ENCODE measurements at regions of chr16 and their contacts with region 1.

Region 1: GRCh38 chr16:23435500-23435899 is 17.5 kb downstream of the COG7 start:
- DNase-seq: no peak
- H3K4me3 ChIP-seq: no peak overlapping the region
- H3K27me3 ChIP-seq: no peaks in the 10 kb centered on the region
- CTCF ChIP-seq: peak; percentile 87

Region 2: DNA sequence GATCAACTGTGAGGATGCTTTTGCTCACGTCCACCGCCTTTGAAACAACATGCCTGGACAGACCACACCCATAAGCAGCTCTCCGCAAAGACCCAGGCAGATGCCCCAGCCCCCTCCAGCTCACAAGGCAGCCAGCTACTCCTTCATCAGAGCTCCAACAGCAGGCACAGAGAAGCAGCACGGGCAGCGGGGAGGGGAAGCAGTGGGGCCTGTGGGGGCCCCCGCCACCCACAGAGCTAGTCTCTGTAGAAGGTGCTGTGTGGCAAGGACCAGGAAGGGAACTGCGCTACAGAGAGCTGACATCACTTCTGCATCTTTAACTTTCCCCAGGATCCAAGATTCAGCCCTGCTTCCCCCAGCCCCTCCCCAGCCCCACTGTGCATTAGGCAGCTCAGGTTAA is 262.9 kb before region 1 on chr16:
- CTCF ChIA-PET with region 1: interaction called, 292 read pairs
- POLR2A ChIA-PET with region 1: no interaction called
- DNase-seq: no peak
- H3K4me3 ChIP-seq: no peak overlapping the region
- H3K27me3 ChIP-seq: no peaks in the 10 kb centered on the region
- CTCF ChIP-seq: no peak

Region 3: DNA sequence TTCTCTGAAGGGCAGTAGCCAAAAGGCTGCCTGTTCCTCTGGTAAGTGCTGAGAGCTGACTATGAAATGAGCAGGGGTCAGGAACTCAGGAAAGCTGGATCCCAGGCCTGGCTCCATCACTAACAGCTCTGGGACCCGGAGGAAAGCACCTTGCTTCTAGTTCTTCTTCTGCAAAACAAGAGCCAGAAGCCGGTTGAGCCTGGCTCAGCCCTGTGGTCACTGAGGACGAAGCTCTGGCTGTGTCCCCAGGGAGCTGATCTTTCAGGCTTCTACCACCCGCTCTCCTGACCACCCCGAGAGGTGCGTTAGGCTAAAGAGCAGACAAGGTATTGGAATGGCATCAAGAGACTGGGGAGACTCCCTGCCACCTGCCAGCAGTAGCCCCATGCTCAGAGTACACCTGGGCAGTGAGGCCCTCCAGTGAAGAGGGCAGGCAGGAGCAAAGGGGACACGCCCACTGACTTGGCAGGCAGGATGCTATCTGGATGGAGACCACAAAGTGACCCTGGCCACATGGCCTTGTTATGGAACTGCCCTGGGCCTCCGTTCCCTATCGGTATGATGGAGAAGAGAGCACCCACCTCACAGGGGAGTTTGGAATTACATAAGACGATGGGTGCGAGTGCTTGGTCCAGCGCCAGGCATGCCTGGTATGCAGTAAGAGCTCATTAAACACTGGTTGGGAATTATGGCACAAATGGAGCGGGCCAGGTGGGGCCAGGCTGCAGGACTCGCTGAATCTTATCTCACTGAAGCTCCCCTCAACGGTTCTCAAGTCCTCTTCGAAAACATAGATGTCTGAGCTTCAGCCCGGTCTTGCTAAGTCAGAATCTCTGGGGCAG is 43.9 kb before region 1 on chr16:
- CTCF ChIA-PET with region 1: interaction called, 22 read pairs
- POLR2A ChIA-PET with region 1: no interaction called
- DNase-seq: no peak
- H3K4me3 ChIP-seq: no peak overlapping the region
- H3K27me3 ChIP-seq: no peaks in the 10 kb centered on the region
- CTCF ChIP-seq: no peak

Region 4: DNA sequence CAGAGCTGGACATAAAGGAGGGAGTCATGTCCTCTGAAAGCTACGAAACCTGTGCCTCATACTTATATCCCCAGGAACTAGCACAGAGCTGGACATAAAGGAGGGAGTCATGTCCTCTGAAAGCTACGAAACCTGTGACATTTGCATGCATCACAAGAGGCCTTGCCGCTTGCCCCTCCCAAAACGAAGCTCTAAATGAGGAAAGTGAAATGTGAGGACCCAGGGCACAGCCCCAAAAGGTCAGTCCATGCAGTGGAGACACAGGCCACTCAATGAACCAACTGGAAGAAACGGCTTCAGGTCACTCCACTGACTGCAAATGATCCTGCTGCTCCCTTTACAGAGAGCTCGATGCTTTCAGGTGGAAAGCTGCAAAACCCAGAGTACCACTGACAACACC is 20.8 kb before region 1 on chr16:
- CTCF ChIA-PET with region 1: interaction called, 21 read pairs
- POLR2A ChIA-PET with region 1: no interaction called
- DNase-seq: no peak
- H3K4me3 ChIP-seq: no peak overlapping the region
- H3K27me3 ChIP-seq: no peaks in the 10 kb centered on the region
- CTCF ChIP-seq: no peak

Region 5: GRCh38 chr16:23452572-23453337 is 17.3 kb after region 1 on chr16 and contains the start of gene COG7:
- CTCF ChIA-PET with region 1: interaction called, 41 read pairs
- POLR2A ChIA-PET with region 1: no interaction called
- DNase-seq: peak; percentile 41
- H3K4me3 ChIP-seq: peak within 1 kb of the TSS; percentile 70
- H3K27me3 ChIP-seq: no peaks in the 10 kb centered on the region
- CTCF ChIP-seq: no peak
- polyA plus RNA-seq, gene COG7: 22.5 and 31.2 TPM in 2 replicates